Natural killer cell (primary cell): ENCODE measurements at regions of chr10 and their contacts with region 1.

Region 1: DNA sequence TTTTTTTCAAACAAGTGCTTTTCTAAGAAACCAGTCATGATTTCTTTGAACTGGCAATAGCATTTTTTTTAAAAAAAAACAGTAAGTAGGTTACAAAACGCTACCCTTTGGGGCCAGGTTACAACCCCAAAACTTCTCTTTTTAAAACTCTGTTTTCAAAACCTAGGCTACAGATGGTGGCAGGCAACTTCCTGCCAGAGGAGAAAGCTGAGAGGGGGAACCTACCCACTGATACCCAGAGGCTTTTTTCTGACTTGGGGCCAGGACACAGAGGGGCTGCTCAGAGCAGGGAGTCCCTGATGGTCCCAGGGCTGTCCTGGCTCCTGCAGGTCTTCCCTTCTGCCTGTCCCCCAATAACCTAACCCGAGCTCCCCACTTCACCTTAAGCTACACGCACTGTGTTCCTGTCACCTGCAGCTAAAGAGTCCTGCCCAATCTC is 6.9 kb downstream of the STN1 start:
- DNase-seq: peak; percentile 20 to 81
- ATAC-seq: peak; percentile 13 to 57 (median 45)
- H3K4me3 ChIP-seq: peak overlapping the region; percentile 8
- H3K4me3 Mint-ChIP-seq: peak overlapping the region; percentile 71
- H3K27ac ChIP-seq: peak overlapping the region; percentile 84
- H3K27ac Mint-ChIP-seq: peak overlapping the region; percentile 90 to 94
- H3K4me1 ChIP-seq: peaks cover 65% of the 10 kb centered on the region
- H3K4me1 Mint-ChIP-seq: peaks cover 72 to 73% of the 10 kb centered on the region in 2 donors
- H3K27me3 ChIP-seq: no peaks in the 10 kb centered on the region
- H3K27me3 Mint-ChIP-seq: no peaks in the 10 kb centered on the region
- CTCF ChIP-seq: no peak

Region 2: DNA sequence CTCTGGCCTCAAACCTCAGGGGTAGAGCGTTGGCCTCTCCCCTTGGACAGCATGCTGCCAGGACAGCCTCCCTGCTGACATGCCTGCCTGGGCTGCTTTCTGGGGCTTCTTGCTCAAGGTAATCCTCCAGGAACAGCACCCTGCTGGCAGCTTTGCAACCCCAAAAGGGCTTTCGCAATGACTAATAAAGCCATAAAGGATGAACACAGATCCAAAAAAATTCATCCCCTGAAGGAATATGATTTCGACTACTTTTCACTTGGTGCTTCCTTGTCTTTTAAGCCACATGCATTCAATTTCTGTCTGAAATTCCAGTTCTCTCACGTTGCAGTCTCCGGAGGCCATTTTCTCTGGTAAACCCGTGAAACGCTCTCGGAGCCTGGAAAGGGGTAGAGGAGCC is 40.5 kb before region 1 on chr10:
- intact Hi-C with region 1: no loop called
- DNase-seq: no peak
- ATAC-seq: no peak
- H3K4me3 ChIP-seq: no peak overlapping the region
- H3K4me3 Mint-ChIP-seq: no peak overlapping the region
- H3K27ac ChIP-seq: no peak overlapping the region
- H3K27ac Mint-ChIP-seq: no peak overlapping the region
- H3K4me1 ChIP-seq: no peaks in the 10 kb centered on the region
- H3K4me1 Mint-ChIP-seq: no peaks in the 10 kb centered on the region
- H3K27me3 ChIP-seq: no peaks in the 10 kb centered on the region
- H3K27me3 Mint-ChIP-seq: no peaks in the 10 kb centered on the region
- CTCF ChIP-seq: no peak

Region 3: GRCh38 chr10:103983367-103983911 is 72.4 kb after region 1 on chr10:
- intact Hi-C with region 1: loop called (anchors 1 kb)
- DNase-seq: peak in 1 of 2 donors; percentile 65
- ATAC-seq: peak; percentile 74 to 87 (median 83)
- H3K4me3 ChIP-seq: no peak overlapping the region
- H3K4me3 Mint-ChIP-seq: peak overlapping the region; percentile 86
- H3K27ac ChIP-seq: peak overlapping the region; percentile 46
- H3K27ac Mint-ChIP-seq: peak overlapping the region; percentile 89 to 91
- H3K4me1 ChIP-seq: peaks cover 20% of the 10 kb centered on the region
- H3K4me1 Mint-ChIP-seq: peaks cover 65 to 70% of the 10 kb centered on the region in 2 donors
- H3K27me3 ChIP-seq: no peaks in the 10 kb centered on the region
- H3K27me3 Mint-ChIP-seq: no peaks in the 10 kb centered on the region
- CTCF ChIP-seq: no peak